ENCODE measurements at regions of chr7 and their contacts with region 1.

Region 1: GRCh38 chr7:90244909-90245851 is at the start of gene CFAP69:
- H3K4me3 Mint-ChIP-seq: peak within 1 kb of the TSS; percentile 80
- H3K27ac Mint-ChIP-seq: peak within 1 kb of the TSS; percentile 50
- H3K4me1 Mint-ChIP-seq: peaks cover 22% of the 10 kb centered on the region
- H3K27me3 Mint-ChIP-seq: peaks cover 45% of the 10 kb centered on the region

Region 2: GRCh38 chr7:90165724-90166123 is 79.5 kb before region 1 on chr7:
- intact Hi-C with region 1: loop called (anchors 5 kb)
- H3K4me3 Mint-ChIP-seq: no peak overlapping the region
- H3K27ac Mint-ChIP-seq: no peak overlapping the region
- H3K4me1 Mint-ChIP-seq: no peaks in the 10 kb centered on the region
- H3K27me3 Mint-ChIP-seq: peaks cover 4% of the 10 kb centered on the region

Region 3: GRCh38 chr7:90222811-90223725 is 22.1 kb before region 1 on chr7:
- intact Hi-C with region 1: no loop called
- H3K4me3 Mint-ChIP-seq: no peak overlapping the region
- H3K27ac Mint-ChIP-seq: no peak overlapping the region
- H3K4me1 Mint-ChIP-seq: no peaks in the 10 kb centered on the region
- H3K27me3 Mint-ChIP-seq: peaks cover 3% of the 10 kb centered on the region

Measured in dendritic cell treated with granulocyte-macrophage colony-stimulating factor and Interleukin-4, amounts not matched to agents 40 ng/mL and 50 ng/mL, for 4 days (primary cell).